Activated CD4-positive, alpha-beta memory T cell treated with anti-CD3 and anti-CD28 coated beads for 36 hours (primary cell): ENCODE measurements at regions of chr6 and their contacts with region 1.

Region 1: DNA sequence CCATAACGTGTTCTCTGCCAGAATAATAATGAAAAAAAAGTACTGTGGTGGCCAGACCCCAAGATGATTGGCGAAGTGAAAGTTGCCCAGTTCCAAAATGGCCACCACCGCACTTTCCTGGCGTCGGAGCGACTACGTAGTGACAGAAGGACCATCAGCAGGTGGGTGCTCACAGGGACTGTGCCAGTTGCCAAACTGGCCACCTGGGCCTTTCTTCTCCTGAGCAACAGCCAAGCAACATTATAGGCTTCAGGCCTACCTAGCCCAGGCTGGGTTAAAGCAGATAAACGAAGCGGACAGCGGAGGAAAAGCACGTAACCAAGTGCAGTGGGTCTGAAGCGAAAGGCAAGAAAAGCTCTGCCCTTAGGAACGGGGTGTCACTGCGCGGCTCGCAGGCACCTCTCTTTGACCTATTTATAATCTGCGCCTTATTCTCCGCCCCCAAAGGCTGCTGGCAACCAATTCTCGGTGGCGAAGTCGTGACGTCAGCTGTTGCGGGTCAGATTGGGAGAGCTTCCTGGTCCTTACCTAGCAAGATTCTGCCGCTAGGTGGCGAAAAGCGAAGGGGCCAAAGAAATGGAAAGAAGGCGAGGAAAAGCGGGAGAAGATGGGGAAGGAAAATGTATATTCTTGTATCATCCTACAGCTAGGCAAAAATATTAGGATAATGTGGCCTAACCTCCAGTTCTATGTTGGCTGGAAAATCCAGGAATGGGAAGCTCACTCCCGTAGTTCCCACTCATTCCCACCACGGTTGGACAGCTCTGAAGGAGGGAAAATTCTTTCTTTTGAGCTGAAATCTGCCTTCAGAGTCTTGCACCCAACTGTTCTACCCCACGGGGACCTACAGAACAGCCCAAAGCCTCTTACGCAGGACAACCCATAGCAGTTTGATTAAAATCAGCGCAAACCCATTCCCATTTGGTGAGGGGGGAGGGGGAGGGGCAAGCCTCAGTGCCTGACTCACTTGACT is 6.9 kb upstream of the MOG start:
- DNase-seq: peak; percentile 98
- H3K4me3 Mint-ChIP-seq: peak overlapping the region; percentile 97
- H3K27ac Mint-ChIP-seq: peak overlapping the region; percentile 98
- H3K4me1 Mint-ChIP-seq: peaks cover 6% of the 10 kb centered on the region
- H3K27me3 Mint-ChIP-seq: no peaks in the 10 kb centered on the region

Region 2: GRCh38 chr6:29236060-29236459 is 413.9 kb before region 1 on chr6:
- CTCF ChIA-PET with region 1: no interaction called
- POLR2A ChIA-PET with region 1: no interaction called
- intact Hi-C with region 1: no loop called
- DNase-seq: no peak
- H3K4me3 Mint-ChIP-seq: no peak overlapping the region
- H3K27ac Mint-ChIP-seq: no peak overlapping the region
- H3K4me1 Mint-ChIP-seq: no peaks in the 10 kb centered on the region
- H3K27me3 Mint-ChIP-seq: peaks cover 20% of the 10 kb centered on the region

Region 3: DNA sequence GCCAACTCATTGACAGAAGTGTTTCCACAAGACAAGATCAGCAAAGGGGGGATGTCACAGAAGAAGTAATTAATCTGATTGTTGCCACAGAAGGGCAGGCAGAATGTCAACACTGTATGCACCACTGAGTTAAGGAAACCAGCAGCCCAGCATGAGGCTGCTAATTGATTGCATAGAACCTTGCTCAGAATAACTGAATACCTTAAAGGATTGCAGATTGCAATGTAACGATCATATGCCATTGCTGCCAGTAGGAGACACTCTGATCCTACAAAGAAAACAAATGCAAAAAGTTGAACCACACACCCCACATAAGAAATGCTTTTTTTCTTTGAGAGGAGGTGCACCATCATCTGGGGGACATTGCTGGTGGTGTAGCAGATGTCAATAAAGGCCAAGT is 294.4 kb before region 1 on chr6:
- CTCF ChIA-PET with region 1: no interaction called
- POLR2A ChIA-PET with region 1: no interaction called
- intact Hi-C with region 1: no loop called
- DNase-seq: no peak
- H3K4me3 Mint-ChIP-seq: no peak overlapping the region
- H3K27ac Mint-ChIP-seq: no peak overlapping the region
- H3K4me1 Mint-ChIP-seq: no peaks in the 10 kb centered on the region
- H3K27me3 Mint-ChIP-seq: peaks cover 31% of the 10 kb centered on the region

Region 4: GRCh38 chr6:29627755-29628418 is 22.1 kb before region 1 on chr6:
- CTCF ChIA-PET with region 1: interaction called, 39 read pairs
- POLR2A ChIA-PET with region 1: interaction called, 4 read pairs
- intact Hi-C with region 1: loop called (anchors 1 kb)
- DNase-seq: peak; percentile 65
- H3K4me3 Mint-ChIP-seq: peak overlapping the region; percentile 77
- H3K27ac Mint-ChIP-seq: peak overlapping the region; percentile 18
- H3K4me1 Mint-ChIP-seq: peaks cover 37% of the 10 kb centered on the region
- H3K27me3 Mint-ChIP-seq: peaks cover 2% of the 10 kb centered on the region

Region 5: DNA sequence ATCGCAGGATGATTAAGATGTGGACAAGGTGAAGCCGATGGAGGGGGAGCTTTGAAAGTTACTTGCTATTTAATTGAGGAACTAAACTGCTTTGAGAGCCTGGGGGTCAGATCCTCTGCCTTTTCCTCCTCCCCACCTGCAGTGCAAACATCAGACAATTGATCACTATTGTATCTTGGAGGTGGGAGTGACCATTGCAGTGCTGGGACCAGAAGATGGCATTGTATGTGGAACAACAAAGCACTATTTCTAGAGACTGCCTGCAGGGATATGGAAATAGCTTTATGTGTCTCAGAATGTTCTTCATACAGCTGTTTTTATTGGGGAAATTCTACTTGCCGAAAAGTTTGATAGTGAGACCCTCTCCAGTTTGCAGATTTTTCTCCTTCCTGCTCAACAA is 11.1 kb after region 1 on chr6:
- CTCF ChIA-PET with region 1: interaction called, 61 read pairs
- POLR2A ChIA-PET with region 1: no interaction called
- intact Hi-C with region 1: no loop called
- DNase-seq: no peak
- H3K4me3 Mint-ChIP-seq: no peak overlapping the region
- H3K27ac Mint-ChIP-seq: no peak overlapping the region
- H3K4me1 Mint-ChIP-seq: no peaks in the 10 kb centered on the region
- H3K27me3 Mint-ChIP-seq: peaks cover 28% of the 10 kb centered on the region

Region 6: GRCh38 chr6:29676981-29677601 is 27.1 kb after region 1 on chr6:
- CTCF ChIA-PET with region 1: interaction called, 22 read pairs
- POLR2A ChIA-PET with region 1: no interaction called
- intact Hi-C with region 1: no loop called
- DNase-seq: no peak
- H3K4me3 Mint-ChIP-seq: no peak overlapping the region
- H3K27ac Mint-ChIP-seq: no peak overlapping the region
- H3K4me1 Mint-ChIP-seq: peaks cover 6% of the 10 kb centered on the region
- H3K27me3 Mint-ChIP-seq: peaks cover 7% of the 10 kb centered on the region

Region 7: DNA sequence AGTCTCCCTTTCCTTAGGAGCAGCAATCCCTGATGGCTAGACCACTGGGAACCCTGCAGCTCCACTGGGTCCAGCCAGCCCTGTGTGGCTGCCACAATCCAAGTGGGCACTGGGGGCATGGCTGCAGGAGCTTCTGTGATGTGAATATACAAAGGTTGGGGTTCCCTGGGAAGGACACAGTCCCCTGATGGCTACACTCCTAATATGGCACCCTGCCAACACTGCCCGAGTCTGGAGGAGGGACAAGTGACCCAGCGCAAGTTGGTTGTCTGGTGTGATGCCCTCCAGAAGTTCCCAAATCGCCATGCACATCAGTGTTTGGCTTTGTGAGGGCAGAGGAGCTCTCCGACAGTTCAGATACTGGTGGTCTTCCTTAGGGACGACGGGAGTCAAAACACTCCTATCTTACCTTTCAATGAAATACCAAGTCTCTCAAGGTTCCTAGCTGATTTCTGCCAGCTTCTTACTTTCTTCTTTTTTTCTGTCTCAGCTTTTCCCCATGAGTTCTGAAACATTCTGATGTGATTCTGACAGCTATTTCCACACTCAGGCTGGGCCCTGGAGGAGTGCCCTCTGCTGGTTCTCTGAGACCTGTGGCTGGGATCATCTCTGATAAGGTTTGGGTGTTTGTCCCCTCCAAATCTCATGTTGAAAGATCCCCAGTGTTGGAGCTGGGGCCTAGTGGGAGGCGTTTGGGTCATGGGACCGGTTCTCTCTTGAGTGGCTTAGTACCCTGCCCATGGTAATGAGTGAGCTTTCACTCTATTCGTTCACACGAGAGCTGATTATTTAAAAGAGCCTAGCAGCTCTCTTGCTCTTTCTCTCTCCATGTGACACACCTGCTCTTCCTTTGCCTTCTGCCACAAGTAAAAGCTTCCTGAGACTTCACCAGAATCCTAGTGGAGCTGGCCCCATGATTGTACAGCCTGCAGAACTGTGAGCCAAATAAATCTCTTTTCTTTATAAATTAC is 46.5 kb after region 1 on chr6:
- CTCF ChIA-PET with region 1: interaction called, 53 read pairs
- POLR2A ChIA-PET with region 1: no interaction called
- intact Hi-C with region 1: no loop called
- DNase-seq: peak; percentile 18
- H3K4me3 Mint-ChIP-seq: no peak overlapping the region
- H3K27ac Mint-ChIP-seq: no peak overlapping the region
- H3K4me1 Mint-ChIP-seq: no peaks in the 10 kb centered on the region
- H3K27me3 Mint-ChIP-seq: peaks cover 2% of the 10 kb centered on the region

Region 8: DNA sequence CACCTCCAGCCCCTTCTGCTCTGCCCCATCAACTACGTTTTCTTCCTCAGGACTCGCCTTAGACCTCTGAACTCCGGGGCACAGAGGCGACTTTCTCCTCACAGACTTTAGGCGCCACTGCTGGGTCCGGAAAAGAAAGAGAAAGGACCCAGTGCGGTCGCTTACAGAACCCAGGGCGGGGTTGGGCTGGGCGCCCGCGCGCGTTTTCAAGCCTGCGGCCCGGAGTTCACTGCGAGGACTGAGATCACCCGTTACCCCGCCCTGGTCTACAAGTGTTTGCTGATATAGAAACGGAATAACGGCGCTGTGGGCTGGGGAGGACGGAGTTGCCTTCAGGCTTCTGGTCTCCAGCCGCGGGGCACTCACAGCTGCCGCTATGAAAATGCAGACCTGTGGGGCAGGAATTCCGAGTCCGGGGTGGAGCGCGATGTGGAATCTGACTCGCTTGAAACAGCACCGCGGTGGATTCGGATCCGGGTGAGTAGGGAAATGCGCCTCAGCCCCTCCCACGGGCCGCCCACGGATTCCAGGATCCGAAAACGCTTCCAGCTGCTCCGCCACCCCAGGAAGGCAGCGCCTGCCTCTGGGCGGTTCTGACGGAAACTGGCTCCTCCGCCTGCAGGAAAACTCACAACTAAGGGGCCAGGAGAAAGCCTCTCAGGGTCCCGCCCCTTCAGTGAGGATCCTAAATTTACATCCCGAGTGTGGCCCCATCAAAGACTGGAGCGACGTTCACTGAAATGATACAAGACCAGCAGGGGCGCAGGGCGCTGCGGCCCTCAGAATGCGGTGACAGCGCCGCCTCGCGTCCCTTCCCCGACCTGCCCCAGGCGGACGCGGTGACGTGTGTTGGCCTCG is 102.7 kb after region 1 on chr6:
- CTCF ChIA-PET with region 1: interaction called, 15 read pairs
- POLR2A ChIA-PET with region 1: no interaction called
- intact Hi-C with region 1: no loop called
- DNase-seq: peak; percentile 91
- H3K4me3 Mint-ChIP-seq: peak overlapping the region; percentile 90
- H3K27ac Mint-ChIP-seq: peak overlapping the region; percentile 81
- H3K4me1 Mint-ChIP-seq: peaks cover 23% of the 10 kb centered on the region
- H3K27me3 Mint-ChIP-seq: peaks cover 11% of the 10 kb centered on the region

Region 9: DNA sequence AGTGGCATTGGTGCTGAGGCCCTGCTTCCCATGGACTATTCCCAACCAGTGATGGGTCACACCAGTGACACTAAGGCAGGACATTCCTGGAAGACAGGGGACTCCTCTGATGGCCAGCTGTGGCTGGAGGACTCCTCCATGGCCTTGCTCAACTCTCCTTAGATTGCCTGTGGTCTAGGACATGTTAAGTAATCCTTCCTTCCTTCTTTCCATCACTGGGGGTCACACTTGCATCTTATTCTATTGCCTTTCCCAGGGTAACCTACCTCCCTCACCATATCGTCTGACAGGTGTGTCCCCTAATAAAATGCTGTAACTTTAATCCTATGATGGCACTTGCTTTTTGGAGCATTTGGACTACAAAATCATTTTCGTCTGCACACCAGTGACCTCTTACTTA is 267.9 kb after region 1 on chr6:
- CTCF ChIA-PET with region 1: no interaction called
- POLR2A ChIA-PET with region 1: no interaction called
- intact Hi-C with region 1: no loop called
- DNase-seq: no peak
- H3K4me3 Mint-ChIP-seq: no peak overlapping the region
- H3K27ac Mint-ChIP-seq: no peak overlapping the region
- H3K4me1 Mint-ChIP-seq: no peaks in the 10 kb centered on the region
- H3K27me3 Mint-ChIP-seq: peaks cover 1% of the 10 kb centered on the region

Region 10: DNA sequence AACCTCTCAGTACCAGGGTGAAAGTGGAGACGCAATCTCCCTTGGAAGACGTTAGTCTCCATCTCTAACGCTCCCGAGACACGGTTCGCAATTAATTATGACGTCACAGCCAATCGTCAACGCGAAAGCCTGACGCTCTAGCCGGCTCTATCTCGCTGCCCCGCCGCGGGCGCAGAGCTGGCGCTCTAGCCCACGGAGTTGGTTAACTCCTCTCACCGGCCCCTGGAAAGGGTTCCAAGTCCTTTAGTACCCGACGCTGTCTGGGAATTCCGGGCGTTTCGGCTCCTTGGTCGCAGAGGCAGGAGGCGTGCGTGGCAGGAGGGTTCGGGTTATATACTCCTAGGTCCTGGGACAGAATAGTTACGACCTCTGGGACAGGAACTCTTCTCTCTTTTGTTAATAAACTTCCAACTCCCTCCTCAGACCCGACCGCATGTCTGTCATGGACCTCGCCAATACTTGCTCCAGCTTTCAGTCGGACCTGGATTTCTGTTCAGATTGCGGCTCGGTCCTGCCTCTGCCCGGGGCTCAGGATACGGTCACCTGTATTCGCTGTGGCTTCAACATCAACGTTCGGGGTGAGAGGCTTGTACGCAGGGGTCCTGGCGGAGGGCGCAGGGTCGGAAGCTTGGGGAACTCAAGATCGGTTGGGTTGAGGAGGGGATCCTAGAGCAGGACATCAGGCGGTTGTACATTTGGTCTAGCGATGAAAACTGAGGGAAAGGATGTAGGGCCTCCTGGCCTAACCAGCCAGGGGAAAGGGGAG is 411.3 kb after region 1 on chr6 and contains the start of gene POLR1H:
- CTCF ChIA-PET with region 1: interaction called, 11 read pairs
- POLR2A ChIA-PET with region 1: interaction called, 4 read pairs
- intact Hi-C with region 1: no loop called
- DNase-seq: peak; percentile 92
- H3K4me3 Mint-ChIP-seq: peak within 1 kb of the TSS; percentile 99
- H3K27ac Mint-ChIP-seq: peak within 1 kb of the TSS; percentile 99
- H3K4me1 Mint-ChIP-seq: peaks cover 35% of the 10 kb centered on the region
- H3K27me3 Mint-ChIP-seq: no peaks in the 10 kb centered on the region
- total RNA-seq, gene POLR1H: 69.4 to 73.2 TPM